ENCODE measurements at regions of chr11 and their contacts with region 1.

Region 1: DNA sequence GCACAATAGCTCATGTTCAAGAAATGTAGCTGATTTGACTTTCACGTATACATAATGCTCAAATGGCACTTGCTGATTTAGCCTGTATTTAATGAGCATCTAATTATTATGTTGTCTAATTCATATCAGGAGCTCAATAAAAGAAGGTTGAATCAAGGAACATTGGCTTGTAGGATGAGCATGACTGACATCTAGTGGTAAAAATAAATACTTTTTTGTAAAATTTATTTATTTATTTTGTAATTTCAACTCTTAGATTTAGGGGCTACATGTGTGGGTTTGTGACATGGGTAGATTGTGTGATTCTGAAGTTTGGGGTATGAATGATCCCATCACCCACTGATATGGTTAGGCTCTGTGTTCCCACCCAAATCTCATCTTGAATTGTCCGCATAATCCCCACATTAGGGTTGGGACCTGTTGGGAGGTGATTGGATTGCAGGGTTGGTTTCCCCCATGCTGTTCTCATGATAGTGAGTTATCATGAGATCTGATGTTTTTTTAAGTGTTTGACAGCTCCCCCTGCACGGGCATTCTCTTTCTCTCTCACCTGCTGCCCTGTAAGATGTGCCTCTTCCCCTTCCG is 1.7 kb upstream of the OR52E5 start:
- DNase-seq: peak in 2 of 9 experiments; percentile 4 to 14
- ATAC-seq: no peak
- H3K4me3 ChIP-seq: no peak overlapping the region
- H3K4me3 Mint-ChIP-seq: no peak overlapping the region
- H3K27ac ChIP-seq: no peak overlapping the region
- H3K27ac Mint-ChIP-seq: no peak overlapping the region
- H3K4me1 ChIP-seq: no peaks in the 10 kb centered on the region
- H3K4me1 Mint-ChIP-seq: no peaks in the 10 kb centered on the region
- H3K27me3 ChIP-seq: peaks cover 0 to 3% of the 10 kb centered on the region in 2 experiments
- H3K27me3 Mint-ChIP-seq: peaks cover 11% of the 10 kb centered on the region
- CTCF ChIP-seq: peak; percentile 51

Region 2: DNA sequence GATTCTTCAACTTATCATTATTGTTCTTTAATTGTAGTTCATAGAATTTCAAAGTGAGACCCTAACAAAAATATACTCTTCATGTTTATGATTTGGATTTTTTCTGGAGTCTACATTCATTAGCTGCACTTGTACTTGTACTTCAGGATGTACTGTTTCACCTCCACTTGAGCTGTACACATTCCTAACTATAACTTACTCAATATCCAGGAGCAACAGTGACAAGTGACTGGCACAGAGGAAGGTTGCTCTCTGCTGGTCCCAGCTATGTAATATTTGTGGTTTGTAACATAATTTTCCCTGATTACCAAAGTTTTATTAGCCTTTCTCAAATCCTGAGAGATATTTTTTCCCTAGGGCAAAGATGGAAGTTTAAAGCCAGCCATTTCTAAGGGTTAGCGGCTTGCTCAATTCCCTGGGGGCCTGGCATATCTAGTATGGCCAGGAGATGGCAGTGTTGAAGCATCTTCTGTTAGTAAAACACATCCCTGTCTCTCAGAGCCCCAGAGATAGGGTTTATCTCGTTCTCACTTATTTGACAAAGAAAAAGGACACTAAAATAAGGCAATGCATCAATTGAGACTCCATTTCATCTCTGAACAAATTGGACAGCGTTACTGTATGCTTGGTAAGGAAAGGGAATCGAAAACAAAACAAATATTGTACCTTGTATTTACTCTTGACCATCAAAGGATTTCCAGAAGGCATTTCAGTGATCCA is 767.3 kb before region 1 on chr11:
- CTCF ChIA-PET with region 1: interaction called, 4 read pairs
- POLR2A ChIA-PET with region 1: no interaction called
- intact Hi-C with region 1: loop called (anchors 2 kb)
- DNase-seq: peak in 7 of 9 experiments; percentile 17 to 55 (median 32)
- ATAC-seq: no peak
- H3K4me3 ChIP-seq: no peak overlapping the region
- H3K4me3 Mint-ChIP-seq: no peak overlapping the region
- H3K27ac ChIP-seq: no peak overlapping the region
- H3K27ac Mint-ChIP-seq: no peak overlapping the region
- H3K4me1 ChIP-seq: no peaks in the 10 kb centered on the region
- H3K4me1 Mint-ChIP-seq: no peaks in the 10 kb centered on the region
- H3K27me3 ChIP-seq: no peaks in the 10 kb centered on the region
- H3K27me3 Mint-ChIP-seq: peaks cover 5% of the 10 kb centered on the region
- CTCF ChIP-seq: peak; percentile 71

Region 3: DNA sequence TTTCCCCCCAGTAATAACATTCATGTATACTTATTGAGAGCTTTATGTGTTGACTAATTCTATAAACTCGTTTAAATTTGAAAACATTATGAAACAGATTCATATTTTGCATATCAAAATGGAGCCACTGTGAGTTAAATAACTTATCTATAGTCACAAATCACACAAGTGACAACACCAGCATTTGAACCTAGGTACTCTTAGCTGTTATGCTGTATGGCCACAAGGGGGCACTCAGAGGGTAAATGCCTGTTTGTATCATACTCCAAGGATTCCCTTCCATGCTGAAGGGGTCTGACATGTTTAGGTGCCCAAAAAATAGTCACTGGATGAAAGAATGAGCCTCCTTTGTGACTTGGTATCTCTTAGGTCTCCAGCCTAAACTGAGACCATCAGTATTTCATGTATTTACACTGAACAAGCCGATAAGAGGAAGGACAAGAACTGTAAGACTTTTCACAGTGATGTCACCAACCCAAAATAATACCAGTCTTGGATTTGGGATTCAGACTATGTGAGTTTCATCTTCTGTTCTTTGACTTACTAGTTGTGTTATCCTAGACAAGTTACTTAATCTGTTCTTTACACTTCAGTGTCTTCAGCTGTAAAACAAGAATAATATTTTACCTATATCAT is 415.0 kb before region 1 on chr11:
- CTCF ChIA-PET with region 1: interaction called, 4 read pairs
- POLR2A ChIA-PET with region 1: no interaction called
- intact Hi-C with region 1: loop called in 1 of 2 experiments (anchors 5 kb)
- DNase-seq: peak in 6 of 9 experiments; percentile 2 to 58 (median 28)
- ATAC-seq: no peak
- H3K4me3 ChIP-seq: no peak overlapping the region
- H3K4me3 Mint-ChIP-seq: no peak overlapping the region
- H3K27ac ChIP-seq: no peak overlapping the region
- H3K27ac Mint-ChIP-seq: no peak overlapping the region
- H3K4me1 ChIP-seq: no peaks in the 10 kb centered on the region
- H3K4me1 Mint-ChIP-seq: no peaks in the 10 kb centered on the region
- H3K27me3 ChIP-seq: no peaks in the 10 kb centered on the region
- H3K27me3 Mint-ChIP-seq: peaks cover 10% of the 10 kb centered on the region
- CTCF ChIP-seq: peak; percentile 74

Region 4: DNA sequence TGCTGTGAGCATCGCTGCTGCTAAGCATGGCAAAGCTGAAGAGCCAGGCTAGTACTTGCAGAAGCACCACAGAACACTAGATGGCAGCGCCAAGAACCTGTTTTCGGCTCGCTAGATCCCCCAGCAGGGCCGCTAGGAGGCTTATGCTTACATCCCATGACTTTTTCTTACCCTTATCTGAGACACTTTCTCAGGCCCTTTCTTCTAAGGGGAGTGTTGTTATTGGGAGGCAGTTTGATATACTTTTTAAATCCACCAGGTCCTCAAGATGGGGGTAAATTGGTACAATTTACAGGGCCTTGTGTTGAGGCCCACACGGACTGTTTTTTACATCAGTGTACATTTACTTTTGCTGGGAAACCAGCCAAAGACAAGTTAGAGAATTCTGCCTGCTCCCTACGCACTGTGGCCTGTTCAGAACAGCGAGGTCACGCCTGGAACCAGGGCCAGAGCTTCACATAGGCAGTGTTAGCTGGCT is 290.9 kb before region 1 on chr11:
- CTCF ChIA-PET with region 1: interaction called, 3 read pairs
- POLR2A ChIA-PET with region 1: no interaction called
- intact Hi-C with region 1: loop called in 1 of 2 experiments (anchors 10 kb)
- DNase-seq: peak; percentile 10 to 77 (median 58)
- ATAC-seq: peak; percentile 89
- H3K4me3 ChIP-seq: no peak overlapping the region
- H3K4me3 Mint-ChIP-seq: no peak overlapping the region
- H3K27ac ChIP-seq: no peak overlapping the region
- H3K27ac Mint-ChIP-seq: no peak overlapping the region
- H3K4me1 ChIP-seq: no peaks in the 10 kb centered on the region
- H3K4me1 Mint-ChIP-seq: peaks cover 4% of the 10 kb centered on the region
- H3K27me3 ChIP-seq: no peaks in the 10 kb centered on the region
- H3K27me3 Mint-ChIP-seq: peaks cover 4% of the 10 kb centered on the region
- CTCF ChIP-seq: peak; percentile 68

Region 5: DNA sequence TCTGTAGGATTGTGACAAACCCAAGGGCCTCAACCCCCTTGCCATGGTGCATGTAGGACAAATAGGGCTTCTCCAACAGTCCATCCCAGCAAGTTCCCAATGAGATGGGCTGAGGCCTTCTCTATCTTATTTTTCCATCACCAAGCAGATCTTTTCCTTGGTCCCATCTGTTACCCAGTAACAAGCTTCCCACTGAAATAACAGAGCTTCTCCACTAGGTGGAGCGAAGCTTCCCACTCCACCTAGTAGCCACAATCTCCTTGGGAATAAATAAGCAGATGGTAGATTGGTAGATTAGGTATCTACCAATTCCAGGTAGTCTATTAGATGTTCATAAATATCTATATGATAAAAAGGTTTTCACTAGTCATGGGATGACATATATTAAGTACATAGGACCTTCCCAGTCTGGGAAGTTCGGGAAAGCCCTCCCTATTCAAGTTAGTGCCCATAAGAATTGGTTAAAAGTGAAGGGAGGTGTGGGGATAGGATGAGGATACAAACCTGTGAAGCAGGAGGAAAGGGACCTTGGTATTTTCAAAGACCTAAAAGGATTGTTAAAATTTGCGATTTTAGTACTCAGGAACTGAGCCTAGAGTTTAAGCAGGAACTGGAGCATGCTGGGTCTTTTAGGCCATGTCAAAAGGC is 101.4 kb after region 1 on chr11:
- CTCF ChIA-PET with region 1: no interaction called
- POLR2A ChIA-PET with region 1: no interaction called
- intact Hi-C with region 1: no loop called
- DNase-seq: no peak
- ATAC-seq: no peak
- H3K4me3 ChIP-seq: no peak overlapping the region
- H3K4me3 Mint-ChIP-seq: no peak overlapping the region
- H3K27ac ChIP-seq: no peak overlapping the region
- H3K27ac Mint-ChIP-seq: no peak overlapping the region
- H3K4me1 ChIP-seq: no peaks in the 10 kb centered on the region
- H3K4me1 Mint-ChIP-seq: no peaks in the 10 kb centered on the region
- H3K27me3 ChIP-seq: no peaks in the 10 kb centered on the region
- H3K27me3 Mint-ChIP-seq: peaks cover 9% of the 10 kb centered on the region
- CTCF ChIP-seq: no peak

Measured in CD8-positive, alpha-beta T cell (primary cell).